MCF 10A (cell line): ENCODE measurements at regions of chr9 and their contacts with region 1.

Region 1: DNA sequence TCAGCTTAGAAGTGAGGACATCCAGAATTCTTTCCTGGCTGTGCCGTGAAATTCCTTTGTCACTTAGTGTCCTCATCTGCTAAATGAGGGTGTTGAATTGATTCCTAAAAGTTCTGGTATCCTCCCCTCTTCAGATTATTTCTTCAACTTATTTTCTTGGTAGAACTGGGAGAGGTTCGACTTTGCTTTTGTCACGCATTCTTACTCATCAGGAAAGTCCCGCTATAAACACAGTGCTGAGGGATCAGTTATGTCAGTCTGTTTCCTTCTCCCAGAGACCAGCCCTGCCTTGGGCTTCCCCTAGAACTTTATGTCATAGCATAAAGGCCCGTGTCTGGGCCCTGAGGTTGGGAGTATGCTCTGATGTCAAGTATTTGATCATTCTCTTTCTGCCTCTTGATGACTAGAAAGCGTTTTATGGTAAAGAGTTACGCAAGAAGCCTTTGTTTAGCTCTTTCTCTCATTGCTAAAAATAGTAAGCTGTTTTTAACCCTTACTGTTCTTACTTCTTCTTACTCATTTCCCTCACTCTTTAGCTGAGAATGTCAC is 29.6 kb downstream of the MTAP start:
- DNase-seq: peak; percentile 79
- H3K4me3 Mint-ChIP-seq: no peak overlapping the region
- H3K27ac Mint-ChIP-seq: peak overlapping the region; percentile 96
- H3K4me1 Mint-ChIP-seq: peaks cover 28% of the 10 kb centered on the region
- H3K27me3 Mint-ChIP-seq: no peaks in the 10 kb centered on the region
- CTCF ChIP-seq: no peak

Region 2: GRCh38 chr9:21728781-21729180 is 103.3 kb before region 1 on chr9:
- CTCF ChIA-PET with region 1: no interaction called
- POLR2A ChIA-PET with region 1: no interaction called
- intact Hi-C with region 1: no loop called
- DNase-seq: no peak
- H3K4me3 Mint-ChIP-seq: no peak overlapping the region
- H3K27ac Mint-ChIP-seq: no peak overlapping the region
- H3K4me1 Mint-ChIP-seq: no peaks in the 10 kb centered on the region
- H3K27me3 Mint-ChIP-seq: no peaks in the 10 kb centered on the region
- CTCF ChIP-seq: no peak

Region 3: DNA sequence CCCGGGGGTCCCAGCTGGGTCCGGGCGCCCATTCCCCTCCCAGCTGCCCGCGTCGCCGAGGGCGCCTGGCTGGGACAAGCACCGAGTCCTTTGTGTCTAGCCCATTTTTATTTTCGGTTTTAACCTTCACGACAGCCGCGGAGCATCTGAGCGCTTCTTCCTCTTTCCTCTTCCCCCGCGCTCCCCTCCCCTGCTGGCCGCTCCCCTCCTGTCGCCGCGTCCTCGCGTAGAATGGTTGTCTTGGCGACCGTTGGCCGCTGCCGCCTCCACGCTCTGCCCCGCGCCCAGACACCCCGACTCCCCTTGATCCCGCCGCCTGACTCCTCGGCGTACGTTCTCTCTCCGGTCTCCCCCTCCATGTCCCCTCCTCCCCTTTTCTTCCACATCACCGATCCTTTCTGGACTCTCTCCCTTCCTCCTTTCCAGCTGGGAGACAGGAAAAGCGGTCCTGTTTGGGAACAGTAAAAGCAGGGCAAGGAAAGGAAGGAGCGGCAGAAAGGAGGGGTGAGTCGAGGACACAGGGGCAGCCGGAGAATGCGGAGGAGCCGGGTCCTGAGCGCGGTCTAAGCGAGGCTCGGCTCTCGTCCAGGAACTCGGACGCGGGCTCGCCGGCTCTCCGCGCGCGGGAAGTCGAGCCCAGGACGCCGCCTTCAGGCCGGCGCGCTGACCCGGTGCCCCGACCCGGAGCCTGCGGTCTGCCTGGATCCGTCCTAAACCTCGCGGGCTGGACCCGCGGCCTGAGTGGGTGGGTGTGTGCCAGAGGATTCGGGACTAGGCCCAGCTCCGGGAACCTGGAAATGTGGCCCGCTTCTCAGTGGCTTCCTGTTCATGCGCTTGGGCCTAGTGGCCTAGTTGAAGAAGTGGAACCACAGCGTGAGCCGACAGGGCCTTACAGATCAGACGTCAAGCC is 163.4 kb after region 1 on chr9:
- CTCF ChIA-PET with region 1: no interaction called
- POLR2A ChIA-PET with region 1: no interaction called
- intact Hi-C with region 1: no loop called
- DNase-seq: no peak
- H3K4me3 Mint-ChIP-seq: no peak overlapping the region
- H3K27ac Mint-ChIP-seq: no peak overlapping the region
- H3K4me1 Mint-ChIP-seq: no peaks in the 10 kb centered on the region
- H3K27me3 Mint-ChIP-seq: no peaks in the 10 kb centered on the region
- CTCF ChIP-seq: no peak

Region 4: DNA sequence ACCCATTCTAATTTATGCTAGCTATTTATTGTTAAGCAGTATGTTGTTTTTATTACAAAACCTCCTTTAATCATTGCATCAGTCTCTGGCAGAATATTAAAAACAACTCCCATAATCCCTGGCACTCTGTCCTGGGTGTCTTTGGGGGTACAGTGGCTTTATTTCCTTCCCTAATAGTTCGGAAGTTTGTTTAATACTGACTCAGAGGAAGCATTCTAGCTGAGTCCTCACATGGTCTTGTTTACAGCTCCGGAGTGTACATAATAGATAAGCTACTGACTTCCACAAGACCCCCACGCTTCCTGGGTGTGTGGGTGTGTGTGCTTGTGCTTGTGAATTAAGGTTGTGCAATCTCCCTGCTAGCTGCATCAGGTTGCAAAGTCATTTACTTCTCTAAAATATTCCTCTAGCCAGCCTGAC is 326.9 kb after region 1 on chr9:
- CTCF ChIA-PET with region 1: no interaction called
- POLR2A ChIA-PET with region 1: interaction called, 23 read pairs
- intact Hi-C with region 1: no loop called
- DNase-seq: peak; percentile 74
- H3K4me3 Mint-ChIP-seq: peak overlapping the region; percentile 25
- H3K27ac Mint-ChIP-seq: peak overlapping the region; percentile 66
- H3K4me1 Mint-ChIP-seq: peaks cover 16% of the 10 kb centered on the region
- H3K27me3 Mint-ChIP-seq: no peaks in the 10 kb centered on the region
- CTCF ChIP-seq: no peak

Region 5: DNA sequence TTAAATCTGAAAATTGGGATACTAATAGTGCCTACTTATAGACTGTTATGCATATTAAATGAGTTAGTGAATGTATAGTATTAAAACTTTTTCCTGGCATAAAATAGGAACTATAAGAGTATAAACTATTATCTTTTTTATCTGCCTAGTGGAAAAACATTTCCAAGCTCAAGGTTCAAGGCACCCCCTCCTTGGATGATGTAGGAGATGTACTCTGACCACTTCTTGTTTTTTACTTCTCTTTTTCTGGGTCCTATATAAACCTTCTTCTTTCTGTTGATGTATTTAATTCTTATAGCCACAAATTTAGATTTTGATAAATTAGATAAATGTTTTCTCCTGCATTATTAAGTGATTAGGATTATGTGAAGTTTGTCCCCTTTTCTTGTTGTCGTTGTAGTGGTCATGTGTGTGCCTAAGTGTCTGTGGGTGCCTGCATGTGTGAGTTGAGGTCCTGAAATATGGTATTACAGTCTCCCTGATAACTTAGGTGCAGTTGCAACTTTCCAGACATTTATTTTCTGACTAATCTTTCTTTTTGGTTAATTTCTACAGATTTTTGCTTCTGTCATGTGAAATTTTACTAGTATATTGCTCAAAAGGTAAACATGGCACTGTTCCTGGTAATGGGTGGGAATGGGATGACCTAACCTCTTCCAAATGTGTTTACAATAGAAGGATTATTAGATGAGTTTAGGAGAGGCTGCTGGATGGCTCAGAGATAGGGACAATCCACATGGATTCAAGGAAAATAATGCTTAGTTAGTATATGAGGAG is 337.9 kb after region 1 on chr9:
- CTCF ChIA-PET with region 1: no interaction called
- POLR2A ChIA-PET with region 1: interaction called, 14 read pairs
- intact Hi-C with region 1: loop called (anchors 5 kb)
- DNase-seq: peak; percentile 59
- H3K4me3 Mint-ChIP-seq: peak overlapping the region; percentile 40
- H3K27ac Mint-ChIP-seq: peak overlapping the region; percentile 92
- H3K4me1 Mint-ChIP-seq: peaks cover 25% of the 10 kb centered on the region
- H3K27me3 Mint-ChIP-seq: no peaks in the 10 kb centered on the region
- CTCF ChIP-seq: no peak

Region 6: DNA sequence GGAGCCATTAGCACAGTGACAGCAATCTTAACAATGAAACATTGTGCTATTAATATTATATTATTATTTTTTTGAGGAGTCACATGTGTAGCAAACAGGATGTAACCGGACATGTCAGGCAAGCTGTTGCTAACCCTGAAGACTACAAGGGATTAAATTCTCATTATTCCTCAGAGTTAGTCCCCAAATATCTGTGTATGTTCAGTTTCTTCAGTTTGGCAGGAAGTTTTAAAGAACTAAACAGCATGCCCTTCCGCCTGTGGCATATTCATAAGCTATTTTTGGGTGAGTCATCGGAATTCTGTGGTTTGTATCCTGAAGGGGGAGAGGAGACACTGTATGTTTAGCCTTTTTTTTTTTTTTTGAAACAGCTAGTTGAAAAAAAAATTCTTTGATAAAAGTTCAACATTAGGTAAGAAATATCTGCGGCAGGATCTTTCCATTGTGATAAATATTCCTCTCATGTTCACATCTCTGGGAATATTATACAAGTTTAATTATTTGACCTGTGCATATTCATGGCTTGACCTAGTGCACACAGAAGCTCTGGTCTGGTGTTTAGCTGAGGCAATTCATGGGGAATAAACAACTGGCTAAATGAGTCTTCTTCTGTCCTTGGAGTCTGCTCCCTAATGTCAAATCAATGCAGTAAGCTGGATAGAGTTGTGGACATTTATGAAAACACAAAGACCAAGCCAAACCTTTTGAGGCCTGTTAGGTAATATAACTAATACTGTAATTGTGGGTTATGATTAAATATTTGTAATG is 379.7 kb after region 1 on chr9:
- CTCF ChIA-PET with region 1: interaction called, 4 read pairs
- POLR2A ChIA-PET with region 1: interaction called, 6 read pairs
- intact Hi-C with region 1: loop called (anchors 5 kb)
- DNase-seq: peak; percentile 79
- H3K4me3 Mint-ChIP-seq: no peak overlapping the region
- H3K27ac Mint-ChIP-seq: peak overlapping the region; percentile 79
- H3K4me1 Mint-ChIP-seq: peaks cover 23% of the 10 kb centered on the region
- H3K27me3 Mint-ChIP-seq: no peaks in the 10 kb centered on the region
- CTCF ChIP-seq: no peak